ENCODE measurements at regions of chr7 and their contacts with region 1.

Region 1: DNA sequence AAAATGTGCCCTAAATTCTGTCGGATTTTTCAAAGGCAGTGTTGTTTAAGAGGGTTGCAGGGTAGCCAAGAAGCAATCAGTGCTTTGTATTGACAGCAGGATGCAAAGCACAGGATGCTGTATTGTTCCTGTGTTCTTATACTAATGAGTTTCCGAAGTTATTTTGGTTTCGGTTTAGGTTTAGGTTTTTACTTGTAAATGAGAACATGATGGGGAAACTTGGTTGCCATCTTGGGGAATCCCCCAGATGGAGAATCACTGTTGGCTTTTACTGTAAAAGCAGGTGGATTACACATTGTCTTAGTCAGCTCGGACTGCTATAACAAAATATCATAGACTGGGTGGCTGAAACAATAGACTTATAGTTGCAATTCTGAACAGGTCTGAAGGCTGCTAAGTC is 72.1 kb downstream of the INHBA start:
- DNase-seq: no peak
- H3K4me3 Mint-ChIP-seq: no peak overlapping the region
- H3K27ac Mint-ChIP-seq: no peak overlapping the region
- H3K4me1 Mint-ChIP-seq: no peaks in the 10 kb centered on the region
- H3K27me3 Mint-ChIP-seq: no peaks in the 10 kb centered on the region

Region 2: GRCh38 chr7:41538810-41539724 is 91.7 kb before region 1 on chr7:
- intact Hi-C with region 1: no loop called
- DNase-seq: no peak
- H3K4me3 Mint-ChIP-seq: no peak overlapping the region
- H3K27ac Mint-ChIP-seq: no peak overlapping the region
- H3K4me1 Mint-ChIP-seq: no peaks in the 10 kb centered on the region
- H3K27me3 Mint-ChIP-seq: no peaks in the 10 kb centered on the region

Region 3: GRCh38 chr7:41685684-41686083 is 54.9 kb after region 1 on chr7:
- intact Hi-C with region 1: loop called (anchors 5 kb)
- DNase-seq: no peak
- H3K4me3 Mint-ChIP-seq: no peak overlapping the region
- H3K27ac Mint-ChIP-seq: no peak overlapping the region
- H3K4me1 Mint-ChIP-seq: no peaks in the 10 kb centered on the region
- H3K27me3 Mint-ChIP-seq: no peaks in the 10 kb centered on the region

Region 4: GRCh38 chr7:41824284-41824683 is 193.5 kb after region 1 on chr7:
- intact Hi-C with region 1: no loop called
- DNase-seq: no peak
- H3K4me3 Mint-ChIP-seq: no peak overlapping the region
- H3K27ac Mint-ChIP-seq: no peak overlapping the region
- H3K4me1 Mint-ChIP-seq: peaks cover 3% of the 10 kb centered on the region
- H3K27me3 Mint-ChIP-seq: peaks cover 4% of the 10 kb centered on the region

Region 5: GRCh38 chr7:41870461-41871138 is 239.9 kb after region 1 on chr7:
- intact Hi-C with region 1: loop called (anchors 10 kb)
- DNase-seq: no peak
- H3K4me3 Mint-ChIP-seq: no peak overlapping the region
- H3K27ac Mint-ChIP-seq: peak overlapping the region; percentile 83
- H3K4me1 Mint-ChIP-seq: peaks cover 37% of the 10 kb centered on the region
- H3K27me3 Mint-ChIP-seq: peaks cover 2% of the 10 kb centered on the region

Region 6: GRCh38 chr7:41977151-41977651 is 346.5 kb after region 1 on chr7:
- intact Hi-C with region 1: no loop called
- DNase-seq: no peak
- H3K4me3 Mint-ChIP-seq: no peak overlapping the region
- H3K27ac Mint-ChIP-seq: no peak overlapping the region
- H3K4me1 Mint-ChIP-seq: no peaks in the 10 kb centered on the region
- H3K27me3 Mint-ChIP-seq: peaks cover 4% of the 10 kb centered on the region

Measured in activated CD4-positive, alpha-beta T cell treated with anti-CD3 and anti-CD28 coated beads, Interleukin-2, amount 10 ng/mL, durations not matched to agents 24 days and 14 days (primary cell).